ENCODE measurements at regions of chr3 and their contacts with region 1.

Region 1: GRCh38 chr3:46926871-46927717 is 49.5 kb downstream of the CCDC12 start:
- DNase-seq: peak in 2 of 4 donors; percentile 52 to 81
- ATAC-seq: no peak
- H3K4me3 ChIP-seq: no peak overlapping the region
- H3K27ac ChIP-seq: peak overlapping the region; percentile 40 to 84
- H3K4me1 ChIP-seq: peaks cover 40 to 78% of the 10 kb centered on the region in 2 donors
- H3K27me3 ChIP-seq: no peaks in the 10 kb centered on the region
- CTCF ChIP-seq: no peak

Region 2: GRCh38 chr3:46998121-46998851 is 71.2 kb after region 1 on chr3:
- intact Hi-C with region 1: loop called in 1 of 2 experiments (anchors 5 kb)
- DNase-seq: peak in 3 of 4 donors; percentile 74 to 93 (median 77)
- ATAC-seq: peak; percentile 83
- H3K4me3 ChIP-seq: no peak overlapping the region
- H3K27ac ChIP-seq: no peak overlapping the region
- H3K4me1 ChIP-seq: peaks cover 0 to 22% of the 10 kb centered on the region in 2 donors
- H3K27me3 ChIP-seq: no peaks in the 10 kb centered on the region
- CTCF ChIP-seq: peak; percentile 73 to 81